PC-9 (cell line): ENCODE measurements at regions of chr13 and their contacts with region 1.

Region 1: GRCh38 chr13:46492946-46493345 is 60.0 kb upstream of the LRCH1 start:
- DNase-seq: peak in 1 of 2 experiments; percentile 8
- H3K4me3 ChIP-seq: no peak overlapping the region
- H3K27ac ChIP-seq: no peak overlapping the region
- H3K4me1 ChIP-seq: no peaks in the 10 kb centered on the region
- H3K27me3 ChIP-seq: no peaks in the 10 kb centered on the region
- CTCF ChIP-seq: peak; percentile 71

Region 2: DNA sequence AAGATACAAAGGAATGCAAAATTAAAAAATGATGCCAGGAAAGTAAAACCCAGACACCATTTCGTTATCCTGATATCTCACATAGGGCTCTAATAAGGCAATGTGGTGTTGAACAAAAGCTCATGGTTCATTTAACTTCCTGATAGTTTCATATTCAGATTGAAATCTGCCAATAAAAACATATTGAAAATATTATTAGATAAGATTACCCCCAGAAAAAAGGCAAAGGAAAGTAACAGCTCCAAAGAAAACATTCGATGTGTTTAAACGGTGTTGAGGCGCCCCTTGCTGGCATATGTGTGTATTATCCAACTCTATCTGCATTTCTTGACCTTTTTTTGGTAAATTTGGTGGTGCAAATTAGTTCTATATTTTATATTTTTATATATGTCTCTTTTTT is 228.1 kb after region 1 on chr13:
- CTCF ChIA-PET with region 1: no interaction called
- POLR2A ChIA-PET with region 1: no interaction called
- intact Hi-C with region 1: loop called (anchors 1 kb)
- DNase-seq: peak; percentile 28 to 37
- H3K4me3 ChIP-seq: no peak overlapping the region
- H3K27ac ChIP-seq: no peak overlapping the region
- H3K4me1 ChIP-seq: no peaks in the 10 kb centered on the region
- H3K27me3 ChIP-seq: no peaks in the 10 kb centered on the region
- CTCF ChIP-seq: peak; percentile 88